CD8-positive, alpha-beta memory T cell (primary cell): ENCODE measurements at regions of chr4 and their contacts with region 1.

Region 1: DNA sequence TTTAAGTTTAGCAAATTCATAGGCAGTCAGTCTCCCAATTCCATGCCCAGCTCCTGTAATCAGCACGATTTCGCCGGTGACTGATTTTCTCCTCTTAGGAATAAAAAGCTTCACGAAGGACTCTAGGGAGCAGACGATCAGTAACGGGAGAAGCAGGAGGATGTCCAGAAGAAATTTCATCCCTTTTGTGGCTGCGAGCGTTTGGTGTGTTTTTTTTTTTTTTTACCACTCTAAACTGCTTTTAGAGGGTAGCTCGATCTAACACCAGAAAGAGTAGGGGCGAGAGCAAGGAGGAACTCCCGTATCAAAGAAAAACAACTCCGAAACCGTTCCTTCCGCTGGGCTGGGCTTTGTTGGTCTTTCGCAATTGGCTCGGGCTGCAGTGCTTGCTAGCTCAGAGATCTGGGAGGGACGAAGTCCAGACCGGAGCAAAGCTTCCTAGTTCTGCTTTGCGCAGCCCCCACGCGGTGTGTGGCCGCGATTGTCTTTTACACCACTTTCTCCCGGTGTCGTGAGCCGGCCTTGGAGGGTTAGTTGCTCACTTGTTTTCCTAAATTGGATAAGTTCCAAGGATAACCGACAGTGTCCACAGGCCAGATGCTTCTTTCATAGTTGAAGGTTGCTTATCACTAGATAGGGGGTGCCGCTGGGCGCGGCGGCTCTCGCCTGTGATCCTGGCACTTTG is at the start of gene HSD17B11:
- DNase-seq: peak; percentile 69 to 89 (median 81)
- H3K4me3 ChIP-seq: peak within 1 kb of the TSS; percentile 97
- H3K4me3 Mint-ChIP-seq: peak within 1 kb of the TSS; percentile 89 to 99 (median 94)
- H3K27ac ChIP-seq: peak within 1 kb of the TSS; percentile 83
- H3K27ac Mint-ChIP-seq: peak within 1 kb of the TSS; percentile 86 to 98 (median 93)
- H3K4me1 ChIP-seq: peaks cover 33% of the 10 kb centered on the region
- H3K4me1 Mint-ChIP-seq: peaks cover 48 to 64% (median 64%) of the 10 kb centered on the region in 3 donors
- H3K27me3 ChIP-seq: no peaks in the 10 kb centered on the region
- H3K27me3 Mint-ChIP-seq: no peaks in the 10 kb centered on the region
- total RNA-seq, gene HSD17B11: 26.7 to 27.0 TPM

Region 2: DNA sequence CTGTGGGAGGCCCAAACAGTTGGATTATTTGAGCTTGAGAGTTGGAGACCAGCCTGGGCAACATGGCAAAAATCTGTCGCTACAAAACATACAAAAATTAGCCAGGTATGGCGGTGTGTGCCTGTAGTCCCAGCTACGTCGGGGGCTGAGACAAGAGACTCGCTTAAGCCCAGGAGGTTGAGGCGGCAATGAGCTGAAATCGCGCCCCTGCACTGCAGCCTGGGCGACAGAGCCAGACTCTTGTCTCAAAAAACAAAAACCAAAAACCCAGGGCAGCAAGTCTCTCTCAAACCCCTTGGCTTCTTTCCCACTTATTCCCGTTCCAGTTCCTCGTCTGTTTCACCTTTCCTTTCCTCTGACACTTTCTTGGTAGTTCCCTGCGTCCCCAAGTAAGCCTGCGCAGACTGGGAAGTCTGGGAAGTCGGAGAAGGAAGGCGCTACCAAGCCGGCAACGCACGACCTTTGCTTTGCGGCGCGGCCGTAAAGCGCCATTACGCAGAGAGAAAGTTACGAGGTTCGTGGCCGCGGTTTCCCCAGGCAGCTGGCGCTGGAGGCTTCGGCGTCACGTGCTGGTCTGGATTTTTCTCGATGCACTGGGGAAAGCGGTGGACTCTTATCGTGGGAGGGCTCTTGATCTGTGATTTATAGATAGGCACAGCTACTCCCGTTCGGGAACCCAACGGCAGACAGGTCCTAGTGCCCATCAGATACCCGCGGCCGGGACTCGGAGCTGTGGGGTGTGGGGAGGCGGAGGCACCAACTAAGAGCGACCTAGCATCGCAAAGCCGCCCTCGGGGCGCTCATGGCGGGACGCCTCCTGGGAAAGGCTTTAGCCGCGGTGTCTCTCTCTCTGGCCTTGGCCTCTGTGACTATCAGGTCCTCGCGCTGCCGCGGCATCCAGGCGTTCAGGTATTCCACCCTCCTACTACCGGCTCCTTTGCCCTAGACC is 31.3 kb after region 1 on chr4 and contains the start of gene NUDT9:
- CTCF ChIA-PET with region 1: interaction called, 16 read pairs
- POLR2A ChIA-PET with region 1: interaction called, 38 read pairs
- DNase-seq: peak; percentile 85 to 92 (median 88)
- H3K4me3 ChIP-seq: peak within 1 kb of the TSS; percentile 93
- H3K4me3 Mint-ChIP-seq: peak within 1 kb of the TSS; percentile 97 to 100 (median 99)
- H3K27ac ChIP-seq: peak within 1 kb of the TSS; percentile 86
- H3K27ac Mint-ChIP-seq: peak within 1 kb of the TSS; percentile 95 to 100 (median 98)
- H3K4me1 ChIP-seq: peaks cover 31% of the 10 kb centered on the region
- H3K4me1 Mint-ChIP-seq: peaks cover 31 to 48% (median 44%) of the 10 kb centered on the region in 3 donors
- H3K27me3 ChIP-seq: no peaks in the 10 kb centered on the region
- H3K27me3 Mint-ChIP-seq: peaks cover 0 to 4% of the 10 kb centered on the region in 2 donors
- total RNA-seq, gene NUDT9: 16.0 to 18.1 TPM

Region 3: GRCh38 chr4:87489678-87490077 is 98.6 kb after region 1 on chr4:
- CTCF ChIA-PET with region 1: no interaction called
- POLR2A ChIA-PET with region 1: no interaction called
- DNase-seq: no peak
- H3K4me3 ChIP-seq: no peak overlapping the region
- H3K4me3 Mint-ChIP-seq: no peak overlapping the region
- H3K27ac ChIP-seq: no peak overlapping the region
- H3K27ac Mint-ChIP-seq: no peak overlapping the region
- H3K4me1 ChIP-seq: no peaks in the 10 kb centered on the region
- H3K4me1 Mint-ChIP-seq: peaks cover 0 to 7% (median 5%) of the 10 kb centered on the region in 3 donors
- H3K27me3 ChIP-seq: no peaks in the 10 kb centered on the region
- H3K27me3 Mint-ChIP-seq: peaks cover 0 to 2% of the 10 kb centered on the region in 2 donors

Region 4: GRCh38 chr4:87500092-87500462 is 109.0 kb after region 1 on chr4:
- CTCF ChIA-PET with region 1: no interaction called
- POLR2A ChIA-PET with region 1: no interaction called
- DNase-seq: no peak
- H3K4me3 ChIP-seq: no peak overlapping the region
- H3K4me3 Mint-ChIP-seq: no peak overlapping the region
- H3K27ac ChIP-seq: no peak overlapping the region
- H3K27ac Mint-ChIP-seq: no peak overlapping the region
- H3K4me1 ChIP-seq: no peaks in the 10 kb centered on the region
- H3K4me1 Mint-ChIP-seq: peaks cover 9 to 28% (median 24%) of the 10 kb centered on the region in 3 donors
- H3K27me3 ChIP-seq: no peaks in the 10 kb centered on the region
- H3K27me3 Mint-ChIP-seq: peaks cover 0 to 2% of the 10 kb centered on the region in 2 donors